Testis (tissue), 5 donors: ENCODE measurements at regions of chr2 and their contacts with region 1.

Region 1: GRCh38 chr2:227238238-227239237 is 74.1 kb downstream of the COL4A3 start:
- DNase-seq: peak; percentile 90
- H3K4me3 ChIP-seq: no peak overlapping the region
- H3K27ac ChIP-seq: no peak overlapping the region
- H3K4me1 ChIP-seq: peaks cover 3% of the 10 kb centered on the region
- H3K27me3 ChIP-seq: no peaks in the 10 kb centered on the region
- CTCF ChIP-seq: peak; percentile 94 to 98 (median 96)
- POLR2A ChIP-seq: no peak

Region 2: GRCh38 chr2:227132986-227133385 is 105.6 kb before region 1 on chr2:
- intact Hi-C with region 1: loop called (anchors 5 kb)
- DNase-seq: no peak
- H3K4me3 ChIP-seq: no peak overlapping the region
- H3K27ac ChIP-seq: no peak overlapping the region
- H3K4me1 ChIP-seq: peaks cover 13% of the 10 kb centered on the region
- H3K27me3 ChIP-seq: no peaks in the 10 kb centered on the region
- CTCF ChIP-seq: no peak
- POLR2A ChIP-seq: no peak

Region 3: DNA sequence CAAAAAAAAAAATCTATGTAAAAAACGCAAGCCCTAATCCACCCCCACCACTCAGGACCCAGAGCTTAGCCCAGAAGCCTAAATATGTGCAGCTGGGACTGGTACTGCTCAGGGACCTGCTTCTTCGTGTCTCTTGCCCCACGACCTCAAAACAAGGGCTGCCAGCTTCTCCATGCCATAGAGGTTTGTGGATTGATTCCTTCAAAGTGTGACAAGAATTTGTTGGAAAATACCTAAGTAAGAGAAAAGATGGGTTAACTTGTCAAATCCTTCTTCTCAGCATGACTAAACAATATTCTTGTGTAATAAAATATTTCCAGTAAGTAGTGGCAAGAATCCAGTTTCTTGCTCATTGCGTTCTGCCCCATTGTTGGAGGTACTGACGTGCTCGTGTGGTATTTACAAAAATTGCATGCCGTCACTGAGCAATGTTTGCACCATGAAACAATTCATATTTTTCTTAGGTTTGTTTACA is 150.0 kb after region 1 on chr2:
- intact Hi-C with region 1: no loop called
- DNase-seq: no peak
- H3K4me3 ChIP-seq: no peak overlapping the region
- H3K27ac ChIP-seq: no peak overlapping the region
- H3K4me1 ChIP-seq: peaks cover 8% of the 10 kb centered on the region
- H3K27me3 ChIP-seq: no peaks in the 10 kb centered on the region
- CTCF ChIP-seq: no peak
- POLR2A ChIP-seq: no peak